Transverse colon (tissue), 4 donors: ENCODE measurements at regions of chr17 and their contacts with region 1.

Region 1: GRCh38 chr17:75749545-75750389 is 15.2 kb downstream of the GALK1 start:
- DNase-seq: peak; percentile 89
- H3K4me3 ChIP-seq: no peak overlapping the region
- H3K27ac ChIP-seq: no peak overlapping the region
- H3K4me1 ChIP-seq: peaks cover 0 to 20% (median 9%) of the 10 kb centered on the region in 4 donors
- H3K27me3 ChIP-seq: no peaks in the 10 kb centered on the region
- CTCF ChIP-seq: peak; percentile 93 to 96 (median 94)
- EP300 ChIP-seq: no peak
- POLR2A ChIP-seq: no peak

Region 2: GRCh38 chr17:75632863-75633485 is 116.8 kb before region 1 on chr17 and contains the start of gene SMIM5:
- in situ Hi-C with region 1: no loop called
- intact Hi-C with region 1: loop called (anchors 2 kb)
- DNase-seq: peak; percentile 90
- H3K4me3 ChIP-seq: peak within 1 kb of the TSS in 1 of 4 donors; percentile 1
- H3K27ac ChIP-seq: peak within 1 kb of the TSS; percentile 72 to 84 (median 81)
- H3K4me1 ChIP-seq: peaks cover 12 to 46% (median 39%) of the 10 kb centered on the region in 4 donors
- H3K27me3 ChIP-seq: no peaks in the 10 kb centered on the region
- CTCF ChIP-seq: peak; percentile 94 to 97 (median 96)
- EP300 ChIP-seq: no peak
- POLR2A ChIP-seq: peak; percentile 21
- total RNA-seq, gene SMIM5: 31.3 to 71.4 (median 50.0) TPM in 3 of 4 donors, not detected in the other

Region 3: GRCh38 chr17:75673487-75673886 is 76.3 kb before region 1 on chr17:
- in situ Hi-C with region 1: loop called (anchors 5 to 10 kb)
- intact Hi-C with region 1: loop called (anchors 5 kb)
- DNase-seq: no peak
- H3K4me3 ChIP-seq: no peak overlapping the region
- H3K27ac ChIP-seq: no peak overlapping the region
- H3K4me1 ChIP-seq: peaks cover 0 to 11% (median 3%) of the 10 kb centered on the region in 4 donors
- H3K27me3 ChIP-seq: no peaks in the 10 kb centered on the region
- CTCF ChIP-seq: no peak
- EP300 ChIP-seq: no peak
- POLR2A ChIP-seq: no peak

Region 4: GRCh38 chr17:75679706-75680442 is 69.9 kb before region 1 on chr17:
- in situ Hi-C with region 1: loop called in 2 of 4 experiments (anchors 10 kb)
- intact Hi-C with region 1: no loop called
- DNase-seq: peak; percentile 60
- H3K4me3 ChIP-seq: no peak overlapping the region
- H3K27ac ChIP-seq: peak overlapping the region; percentile 46 to 81 (median 78)
- H3K4me1 ChIP-seq: peaks cover 11 to 45% (median 22%) of the 10 kb centered on the region in 4 donors
- H3K27me3 ChIP-seq: no peaks in the 10 kb centered on the region
- CTCF ChIP-seq: peak in 4 of 5 experiments; percentile 14 to 72 (median 42)
- EP300 ChIP-seq: no peak
- POLR2A ChIP-seq: no peak

Region 5: GRCh38 chr17:75808905-75809715 is 59.3 kb after region 1 on chr17:
- in situ Hi-C with region 1: no loop called
- intact Hi-C with region 1: no loop called
- DNase-seq: no peak
- H3K4me3 ChIP-seq: no peak overlapping the region
- H3K27ac ChIP-seq: peak overlapping the region in 3 of 4 donors; percentile 14 to 53 (median 44)
- H3K4me1 ChIP-seq: no peaks in the 10 kb centered on the region
- H3K27me3 ChIP-seq: no peaks in the 10 kb centered on the region
- CTCF ChIP-seq: no peak
- EP300 ChIP-seq: no peak
- POLR2A ChIP-seq: no peak

Region 6: GRCh38 chr17:75827252-75828115 is 77.7 kb after region 1 on chr17:
- in situ Hi-C with region 1: no loop called
- intact Hi-C with region 1: loop called (anchors 10 kb)
- DNase-seq: peak; percentile 65
- H3K4me3 ChIP-seq: peak overlapping the region in 2 of 4 donors; percentile 32
- H3K27ac ChIP-seq: peak overlapping the region; percentile 55 to 86 (median 76)
- H3K4me1 ChIP-seq: peaks cover 12 to 22% (median 15%) of the 10 kb centered on the region in 4 donors
- H3K27me3 ChIP-seq: no peaks in the 10 kb centered on the region
- CTCF ChIP-seq: peak; percentile 67 to 81 (median 71)
- EP300 ChIP-seq: no peak
- POLR2A ChIP-seq: no peak